Gastrocnemius medialis (tissue), 4 donors: ENCODE measurements at regions of chr1 and their contacts with region 1.

Region 1: GRCh38 chr1:220733090-220733601 is 15.0 kb upstream of the MTARC2 start:
- DNase-seq: peak; percentile 55 to 63
- ATAC-seq: peak; percentile 97 to 100
- H3K4me3 ChIP-seq: peak overlapping the region; percentile 35 to 45 (median 40)
- H3K27ac ChIP-seq: peak overlapping the region; percentile 33 to 73 (median 65)
- H3K4me1 ChIP-seq: peaks cover 4 to 9% of the 10 kb centered on the region in 2 donors
- H3K27me3 ChIP-seq: no peaks in the 10 kb centered on the region
- CTCF ChIP-seq: peak; percentile 70 to 88 (median 84)
- POLR2A ChIP-seq: no peak

Region 2: DNA sequence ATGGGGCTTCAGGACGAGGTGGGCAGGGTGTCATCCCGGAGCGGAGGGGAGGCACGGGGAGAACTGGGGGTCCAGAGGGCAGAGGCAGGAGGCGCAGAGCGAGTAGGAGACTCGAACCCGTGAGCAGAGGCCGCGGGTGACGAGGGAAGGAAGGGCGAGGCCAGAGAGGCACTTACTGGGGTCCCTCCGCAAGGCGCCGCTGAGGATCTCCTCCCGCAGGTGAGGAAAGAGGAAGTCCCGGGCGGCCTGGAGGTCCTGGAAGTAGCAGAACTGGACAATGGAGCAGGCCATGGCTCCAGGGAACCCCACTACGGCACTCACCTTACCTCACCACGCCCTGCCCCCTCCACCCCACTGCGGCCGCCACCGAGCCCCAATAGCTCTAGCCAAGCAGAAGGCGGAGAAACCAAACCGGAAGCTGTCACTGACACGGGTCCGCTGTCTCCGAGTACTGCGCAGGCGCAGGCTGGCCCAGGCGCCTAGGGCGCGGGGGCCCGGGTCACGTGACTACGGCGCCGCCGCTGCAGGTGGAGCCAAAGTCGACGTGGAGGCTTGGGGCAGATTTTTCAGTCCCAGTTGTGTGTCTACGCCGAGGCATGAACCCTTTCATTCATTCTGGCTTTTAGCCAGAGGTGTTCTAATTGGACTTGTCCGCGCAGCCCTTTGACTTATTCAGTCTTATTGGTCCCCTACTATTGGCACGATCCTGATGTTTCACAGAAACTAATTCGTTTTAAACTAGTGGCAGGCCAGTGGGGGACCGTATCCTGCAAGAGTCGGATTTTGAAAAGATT is 460.9 kb before region 1 on chr1 and contains the start of gene RAB3GAP2:
- in situ Hi-C with region 1: loop called in 1 of 4 experiments (anchors 25 kb)
- intact Hi-C with region 1: loop called (anchors 2 kb)
- DNase-seq: peak; percentile 84 to 92
- ATAC-seq: peak; percentile 98 to 99
- H3K4me3 ChIP-seq: peak within 1 kb of the TSS; percentile 88 to 96 (median 90)
- H3K27ac ChIP-seq: peak within 1 kb of the TSS; percentile 80 to 87 (median 87)
- H3K4me1 ChIP-seq: peaks cover 9 to 29% of the 10 kb centered on the region in 2 donors
- H3K27me3 ChIP-seq: no peaks in the 10 kb centered on the region
- CTCF ChIP-seq: peak in 2 of 5 experiments; percentile 20 to 37
- POLR2A ChIP-seq: peak; percentile 66 to 67
- total RNA-seq, gene RAB3GAP2: 16.5 to 24.2 (median 18.0) TPM

Region 3: GRCh38 chr1:220281159-220281574 is 452.0 kb before region 1 on chr1:
- in situ Hi-C with region 1: loop called in 1 of 4 experiments (anchors 25 kb)
- intact Hi-C with region 1: no loop called
- DNase-seq: no peak
- ATAC-seq: no peak
- H3K4me3 ChIP-seq: no peak overlapping the region
- H3K27ac ChIP-seq: no peak overlapping the region
- H3K4me1 ChIP-seq: no peaks in the 10 kb centered on the region
- H3K27me3 ChIP-seq: peaks cover 0 to 4% (median 0%) of the 10 kb centered on the region in 3 donors
- CTCF ChIP-seq: peak in 4 of 5 experiments; percentile 16 to 62 (median 38)
- POLR2A ChIP-seq: no peak

Region 4: GRCh38 chr1:220680085-220680687 is 53.0 kb before region 1 on chr1:
- in situ Hi-C with region 1: loop called in 3 of 4 experiments (anchors 10 kb)
- intact Hi-C with region 1: loop called (anchors 1 kb)
- DNase-seq: no peak
- ATAC-seq: peak; percentile 47 to 71
- H3K4me3 ChIP-seq: no peak overlapping the region
- H3K27ac ChIP-seq: no peak overlapping the region
- H3K4me1 ChIP-seq: peaks cover 0 to 5% of the 10 kb centered on the region in 2 donors
- H3K27me3 ChIP-seq: no peaks in the 10 kb centered on the region
- CTCF ChIP-seq: peak; percentile 51 to 76 (median 66)
- POLR2A ChIP-seq: no peak

Region 5: GRCh38 chr1:220690140-220691025 is 42.8 kb before region 1 on chr1 and contains the start of gene C1orf115:
- in situ Hi-C with region 1: loop called in 3 of 4 experiments (anchors 10 kb)
- intact Hi-C with region 1: loop called (anchors 2 kb)
- DNase-seq: peak; percentile 22 to 66
- ATAC-seq: peak; percentile 89 to 94
- H3K4me3 ChIP-seq: peak within 1 kb of the TSS; percentile 58 to 92 (median 68)
- H3K27ac ChIP-seq: peak within 1 kb of the TSS; percentile 14 to 71 (median 50)
- H3K4me1 ChIP-seq: peaks cover 0 to 10% of the 10 kb centered on the region in 2 donors
- H3K27me3 ChIP-seq: no peaks in the 10 kb centered on the region
- CTCF ChIP-seq: peak; percentile 85 to 96 (median 90)
- POLR2A ChIP-seq: no peak
- total RNA-seq, gene C1orf115: 2.2 to 6.7 (median 4.6) TPM